ENCODE measurements at regions of chr3 and their contacts with region 1.

Region 1: DNA sequence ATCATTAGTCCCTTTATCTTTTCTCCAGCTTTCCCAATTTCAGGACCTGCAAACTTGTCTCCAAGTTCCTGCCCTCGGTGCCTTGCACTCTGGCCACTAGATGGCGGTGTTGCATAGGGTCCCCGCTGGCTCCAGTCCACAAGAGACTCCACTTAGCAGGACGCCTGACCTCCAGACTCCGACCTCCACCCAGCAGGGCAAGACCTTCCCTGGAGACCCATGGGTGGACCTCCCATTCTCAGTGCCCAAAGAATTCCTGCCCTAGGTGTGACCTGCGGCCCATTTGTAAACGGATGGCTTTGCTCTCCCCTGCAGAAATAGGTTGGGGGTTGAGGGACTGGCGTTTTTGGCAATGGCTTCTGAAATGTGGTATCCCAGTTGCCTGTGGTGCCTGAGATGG is 82.6 kb downstream of the LSM3 start:
- DNase-seq: peak; percentile 89
- H3K4me3 ChIP-seq: no peak overlapping the region
- H3K27ac ChIP-seq: no peak overlapping the region
- H3K4me1 ChIP-seq: peaks cover 0 to 6% (median 0%) of the 10 kb centered on the region in 4 donors
- H3K27me3 ChIP-seq: peaks cover 4% of the 10 kb centered on the region
- CTCF ChIP-seq: peak; percentile 96 to 98 (median 97)
- EP300 ChIP-seq: no peak
- POLR2A ChIP-seq: no peak

Region 2: DNA sequence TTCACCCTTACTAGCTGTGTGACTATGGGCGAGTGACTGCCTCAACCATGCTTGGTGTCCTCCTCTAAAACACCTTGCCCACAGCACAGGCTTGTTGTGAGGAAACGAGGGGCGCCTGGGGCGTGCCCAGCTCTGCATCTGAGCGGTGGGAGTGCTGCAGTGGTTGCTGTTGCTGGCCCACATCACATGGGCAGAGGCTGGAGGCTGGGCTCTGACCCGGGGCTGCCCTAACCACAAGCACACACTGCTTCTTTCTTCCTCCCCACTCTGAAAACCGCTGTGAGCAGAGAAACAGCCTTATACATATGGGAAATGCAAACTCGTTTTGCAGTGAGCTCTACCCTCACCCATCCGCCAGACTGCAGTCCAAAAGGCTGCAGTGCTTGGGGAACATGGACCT is 1345.1 kb before region 1 on chr3:
- in situ Hi-C with region 1: no loop called
- intact Hi-C with region 1: no loop called
- DNase-seq: peak; percentile 20
- H3K4me3 ChIP-seq: no peak overlapping the region
- H3K27ac ChIP-seq: no peak overlapping the region
- H3K4me1 ChIP-seq: no peaks in the 10 kb centered on the region
- H3K27me3 ChIP-seq: no peaks in the 10 kb centered on the region
- CTCF ChIP-seq: no peak
- EP300 ChIP-seq: no peak
- POLR2A ChIP-seq: no peak

Region 3: GRCh38 chr3:14461748-14462324 is 200.6 kb after region 1 on chr3:
- in situ Hi-C with region 1: loop called (anchors 5 to 10 kb)
- intact Hi-C with region 1: no loop called
- DNase-seq: peak; percentile 72
- H3K4me3 ChIP-seq: no peak overlapping the region
- H3K27ac ChIP-seq: no peak overlapping the region
- H3K4me1 ChIP-seq: peaks cover 0 to 8% (median 4%) of the 10 kb centered on the region in 4 donors
- H3K27me3 ChIP-seq: no peaks in the 10 kb centered on the region
- CTCF ChIP-seq: peak; percentile 42 to 82 (median 57)
- EP300 ChIP-seq: no peak
- POLR2A ChIP-seq: no peak

Region 4: DNA sequence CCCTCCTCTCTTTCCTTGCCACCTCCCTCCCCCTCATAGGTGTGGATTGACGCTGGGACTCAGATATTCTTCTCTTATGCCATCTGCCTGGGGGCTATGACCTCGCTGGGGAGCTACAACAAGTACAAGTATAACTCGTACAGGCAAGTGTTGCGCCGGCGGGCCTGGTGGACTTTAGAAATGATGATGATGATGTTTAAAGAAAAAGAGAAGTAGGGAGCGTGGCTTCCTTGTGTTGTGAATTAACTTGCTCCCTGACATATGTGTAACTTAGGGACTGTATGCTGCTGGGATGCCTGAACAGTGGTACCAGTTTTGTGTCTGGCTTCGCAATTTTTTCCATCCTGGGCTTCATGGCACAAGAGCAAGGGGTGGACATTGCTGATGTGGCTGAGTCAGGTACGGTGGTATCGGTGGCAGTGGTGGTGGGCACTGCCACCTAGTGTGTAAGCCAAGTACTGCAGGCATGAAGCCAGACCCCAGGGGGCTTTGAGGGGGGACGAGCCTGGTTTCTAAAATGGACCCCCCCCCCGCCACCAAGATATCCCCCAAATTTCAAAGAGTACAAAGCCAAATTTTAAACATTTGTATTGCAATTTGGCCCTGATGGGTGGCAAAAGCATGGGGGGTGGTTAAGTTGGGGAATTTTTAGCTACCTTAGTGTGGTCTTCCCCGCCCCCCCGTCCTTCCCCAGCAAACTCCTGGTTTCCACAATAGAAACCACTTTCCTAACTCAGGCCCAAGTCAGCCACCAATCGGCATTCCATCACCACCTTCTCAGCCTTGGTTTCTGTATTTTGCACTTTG is 206.8 kb after region 1 on chr3:
- in situ Hi-C with region 1: loop called (anchors 5 to 10 kb)
- intact Hi-C with region 1: loop called (anchors 2 kb)
- DNase-seq: peak; percentile 35
- H3K4me3 ChIP-seq: no peak overlapping the region
- H3K27ac ChIP-seq: no peak overlapping the region
- H3K4me1 ChIP-seq: no peaks in the 10 kb centered on the region
- H3K27me3 ChIP-seq: no peaks in the 10 kb centered on the region
- CTCF ChIP-seq: peak; percentile 89 to 95 (median 93)
- EP300 ChIP-seq: no peak
- POLR2A ChIP-seq: no peak

Measured in transverse colon (tissue), 4 donors.